Activated naive CD4-positive, alpha-beta T cell treated with anti-CD3 and anti-CD28 coated beads for 36 hours (primary cell): ENCODE measurements at regions of chr15 and their contacts with region 1.

Region 1: GRCh38 chr15:60528530-60528929 is 49.6 kb upstream of the ICE2 start:
- DNase-seq: peak; percentile 29
- H3K4me3 Mint-ChIP-seq: no peak overlapping the region
- H3K27ac Mint-ChIP-seq: peak overlapping the region; percentile 71
- H3K4me1 Mint-ChIP-seq: peaks cover 58% of the 10 kb centered on the region
- H3K27me3 Mint-ChIP-seq: no peaks in the 10 kb centered on the region

Region 2: GRCh38 chr15:60541481-60542299 is 13.2 kb after region 1 on chr15:
- CTCF ChIA-PET with region 1: no interaction called
- intact Hi-C with region 1: loop called (anchors 2 kb)
- DNase-seq: no peak
- H3K4me3 Mint-ChIP-seq: no peak overlapping the region
- H3K27ac Mint-ChIP-seq: no peak overlapping the region
- H3K4me1 Mint-ChIP-seq: peaks cover 91% of the 10 kb centered on the region
- H3K27me3 Mint-ChIP-seq: no peaks in the 10 kb centered on the region